Activated CD8-positive, alpha-beta memory T cell treated with anti-CD3 and anti-CD28 coated beads, Interleukin-2, amount 10 ng/mL, durations not matched to agents 7 days and 5 days (primary cell): ENCODE measurements at regions of chr15 and their contacts with region 1.

Region 1: DNA sequence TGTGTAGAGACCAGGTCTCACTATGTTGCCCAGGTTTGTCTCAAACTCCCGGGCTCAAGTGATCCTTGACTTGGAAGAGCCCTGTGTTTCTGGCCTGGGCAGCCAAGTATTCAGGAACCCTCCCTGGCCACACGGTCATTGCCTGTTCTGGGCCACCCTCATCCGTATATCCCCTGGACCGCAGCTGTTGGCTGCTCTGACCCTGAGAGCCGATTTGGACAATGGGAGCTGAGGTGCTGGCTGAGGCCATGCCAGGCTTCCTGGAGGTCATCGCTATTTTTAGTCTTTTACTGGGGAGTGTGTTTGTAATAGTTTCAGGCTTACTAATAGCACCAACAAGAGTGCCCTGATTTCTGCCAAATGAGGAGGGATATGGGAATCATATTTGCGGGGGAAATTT is 60.7 kb downstream of the ADAMTS7 start:
- DNase-seq: no peak
- ATAC-seq: no peak
- H3K4me3 Mint-ChIP-seq: peak overlapping the region; percentile 37
- H3K27ac Mint-ChIP-seq: no peak overlapping the region
- H3K4me1 Mint-ChIP-seq: peaks cover 3% of the 10 kb centered on the region
- H3K27me3 Mint-ChIP-seq: peaks cover 3% of the 10 kb centered on the region

Region 2: GRCh38 chr15:78739996-78740903 is 10.3 kb before region 1 on chr15:
- CTCF ChIA-PET with region 1: interaction called, 19 read pairs
- DNase-seq: peak; percentile 84
- ATAC-seq: peak; percentile 89
- H3K4me3 Mint-ChIP-seq: no peak overlapping the region
- H3K27ac Mint-ChIP-seq: no peak overlapping the region
- H3K4me1 Mint-ChIP-seq: peaks cover 13% of the 10 kb centered on the region
- H3K27me3 Mint-ChIP-seq: peaks cover 9% of the 10 kb centered on the region

Region 3: GRCh38 chr15:78761891-78762385 is 11.4 kb after region 1 on chr15:
- CTCF ChIA-PET with region 1: interaction called, 11 read pairs
- DNase-seq: no peak
- ATAC-seq: peak; percentile 34
- H3K4me3 Mint-ChIP-seq: peak overlapping the region; percentile 15
- H3K27ac Mint-ChIP-seq: peak overlapping the region; percentile 88
- H3K4me1 Mint-ChIP-seq: peaks cover 25% of the 10 kb centered on the region
- H3K27me3 Mint-ChIP-seq: no peaks in the 10 kb centered on the region